ENCODE measurements at regions of chr5 and their contacts with region 1.

Region 1: GRCh38 chr5:56814963-56815658 is at the start of gene MAP3K1:
- DNase-seq: peak; percentile 86
- ATAC-seq: peak; percentile 63
- H3K4me3 Mint-ChIP-seq: peak within 1 kb of the TSS; percentile 93
- H3K27ac Mint-ChIP-seq: peak within 1 kb of the TSS; percentile 93
- H3K4me1 Mint-ChIP-seq: peaks cover 50% of the 10 kb centered on the region
- H3K27me3 Mint-ChIP-seq: no peaks in the 10 kb centered on the region
- CTCF ChIP-seq: no peak
- total RNA-seq, gene MAP3K1: 92.8 and 102 TPM in 2 replicates

Region 2: GRCh38 chr5:55994574-55995333 is 820.4 kb before region 1 on chr5 and contains the start of gene IL6ST:
- CTCF ChIA-PET with region 1: no interaction called
- POLR2A ChIA-PET with region 1: no interaction called
- intact Hi-C with region 1: loop called (anchors 1 kb)
- DNase-seq: peak; percentile 95
- ATAC-seq: peak; percentile 92
- H3K4me3 Mint-ChIP-seq: peak within 1 kb of the TSS; percentile 96
- H3K27ac Mint-ChIP-seq: peak within 1 kb of the TSS; percentile 95
- H3K4me1 Mint-ChIP-seq: peaks cover 38% of the 10 kb centered on the region
- H3K27me3 Mint-ChIP-seq: peaks cover 5% of the 10 kb centered on the region
- CTCF ChIP-seq: no peak
- total RNA-seq, gene IL6ST: 39.8 and 48.3 TPM in 2 replicates

Region 3: GRCh38 chr5:56415356-56415765 is 399.8 kb before region 1 on chr5:
- CTCF ChIA-PET with region 1: interaction called, 4 read pairs
- POLR2A ChIA-PET with region 1: interaction called, 7 read pairs
- intact Hi-C with region 1: loop called (anchors 1 kb)
- DNase-seq: peak; percentile 48
- ATAC-seq: peak; percentile 71
- H3K4me3 Mint-ChIP-seq: peak overlapping the region; percentile 78
- H3K27ac Mint-ChIP-seq: peak overlapping the region; percentile 99
- H3K4me1 Mint-ChIP-seq: peaks cover 82% of the 10 kb centered on the region
- H3K27me3 Mint-ChIP-seq: no peaks in the 10 kb centered on the region
- CTCF ChIP-seq: no peak

Region 4: DNA sequence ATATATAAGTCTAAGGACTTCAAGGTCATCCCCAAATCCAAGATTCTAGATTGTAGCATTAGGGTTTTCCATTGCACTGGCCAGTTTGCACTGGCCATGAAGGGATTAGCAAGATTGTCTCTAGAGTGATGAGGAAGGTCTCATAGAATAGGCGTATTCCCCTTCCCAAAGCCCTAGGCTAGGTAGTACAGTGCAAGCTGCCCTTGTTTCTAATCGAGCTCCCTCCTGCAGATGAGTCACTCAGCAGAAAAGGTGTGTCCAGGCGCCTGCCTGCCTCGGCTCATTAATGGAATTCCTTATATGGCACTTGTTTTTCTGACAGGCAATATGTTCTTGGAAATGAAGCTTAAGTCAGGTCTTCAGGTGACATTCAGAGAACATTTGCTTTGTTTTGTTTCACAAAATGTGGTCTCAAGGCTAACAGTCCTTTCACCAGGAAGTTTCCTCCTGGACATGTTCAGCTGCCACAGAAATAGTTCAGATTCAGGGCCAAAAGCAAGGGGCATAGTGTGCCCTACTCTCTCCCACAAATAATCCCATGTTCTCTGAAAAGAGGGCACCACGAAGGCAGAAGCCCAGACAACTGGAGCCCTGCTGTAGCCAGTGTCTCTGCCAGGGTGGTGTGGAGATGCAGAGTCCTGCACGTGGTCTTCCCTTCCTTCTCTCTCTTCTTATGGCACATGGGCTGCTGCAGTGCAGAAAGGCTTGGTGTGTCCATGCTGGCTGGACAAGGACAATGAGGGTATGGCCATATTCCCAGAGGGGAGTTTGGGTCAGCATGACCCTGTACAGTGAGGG is 280.9 kb before region 1 on chr5:
- CTCF ChIA-PET with region 1: no interaction called
- POLR2A ChIA-PET with region 1: no interaction called
- intact Hi-C with region 1: no loop called
- DNase-seq: no peak
- ATAC-seq: no peak
- H3K4me3 Mint-ChIP-seq: no peak overlapping the region
- H3K27ac Mint-ChIP-seq: no peak overlapping the region
- H3K4me1 Mint-ChIP-seq: no peaks in the 10 kb centered on the region
- H3K27me3 Mint-ChIP-seq: no peaks in the 10 kb centered on the region
- CTCF ChIP-seq: no peak

Region 5: GRCh38 chr5:56588636-56589480 is 226.3 kb before region 1 on chr5:
- CTCF ChIA-PET with region 1: no interaction called
- POLR2A ChIA-PET with region 1: interaction called, 9 read pairs
- intact Hi-C with region 1: loop called (anchors 1 kb)
- DNase-seq: peak; percentile 69
- ATAC-seq: peak; percentile 86
- H3K4me3 Mint-ChIP-seq: peak overlapping the region; percentile 64
- H3K27ac Mint-ChIP-seq: peak overlapping the region; percentile 97
- H3K4me1 Mint-ChIP-seq: peaks cover 69% of the 10 kb centered on the region
- H3K27me3 Mint-ChIP-seq: no peaks in the 10 kb centered on the region
- CTCF ChIP-seq: no peak

Region 6: GRCh38 chr5:56749842-56750241 is 65.3 kb before region 1 on chr5:
- CTCF ChIA-PET with region 1: no interaction called
- POLR2A ChIA-PET with region 1: no interaction called
- intact Hi-C with region 1: no loop called
- DNase-seq: no peak
- ATAC-seq: peak; percentile 40
- H3K4me3 Mint-ChIP-seq: no peak overlapping the region
- H3K27ac Mint-ChIP-seq: no peak overlapping the region
- H3K4me1 Mint-ChIP-seq: peaks cover 33% of the 10 kb centered on the region
- H3K27me3 Mint-ChIP-seq: no peaks in the 10 kb centered on the region
- CTCF ChIP-seq: no peak

Region 7: DNA sequence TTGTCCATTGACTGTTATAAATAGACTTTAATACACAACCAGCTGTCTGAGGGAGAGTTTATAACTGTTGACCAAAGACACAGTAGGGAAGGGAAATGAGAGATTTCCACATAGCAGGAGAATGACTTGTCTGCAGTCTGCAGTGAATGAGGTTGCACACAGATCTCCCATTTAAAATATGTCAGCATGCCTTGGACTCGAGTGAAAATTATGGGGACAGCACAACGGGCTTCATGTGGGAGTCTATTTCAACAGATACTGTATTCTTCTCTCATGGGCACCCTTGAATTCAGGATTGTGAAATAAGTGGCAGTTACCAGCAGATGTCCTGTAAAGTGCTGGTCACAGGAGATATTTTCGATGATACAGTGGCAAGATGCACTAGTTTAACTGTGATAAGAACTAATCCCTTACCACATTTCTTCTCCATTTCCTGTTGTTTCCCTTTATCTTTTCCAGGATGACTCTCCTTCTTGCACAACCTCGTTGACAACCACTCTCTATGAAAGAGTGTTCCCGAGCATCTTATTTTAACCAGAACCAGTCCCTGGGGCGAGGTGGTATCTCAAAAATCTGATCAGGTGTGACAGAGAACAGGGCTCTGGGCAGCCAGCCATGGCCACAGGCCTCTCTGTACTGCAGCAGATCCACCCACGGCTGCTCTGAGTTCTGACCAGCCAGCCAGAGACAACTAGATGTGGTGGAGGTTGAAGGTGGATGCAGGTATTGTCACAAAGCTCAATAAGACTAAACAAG is 51.2 kb before region 1 on chr5:
- CTCF ChIA-PET with region 1: no interaction called
- POLR2A ChIA-PET with region 1: interaction called, 4 read pairs
- intact Hi-C with region 1: loop called (anchors 5 kb)
- DNase-seq: peak; percentile 35
- ATAC-seq: peak; percentile 91
- H3K4me3 Mint-ChIP-seq: peak overlapping the region; percentile 38
- H3K27ac Mint-ChIP-seq: peak overlapping the region; percentile 78
- H3K4me1 Mint-ChIP-seq: peaks cover 78% of the 10 kb centered on the region
- H3K27me3 Mint-ChIP-seq: no peaks in the 10 kb centered on the region
- CTCF ChIP-seq: no peak

Region 8: DNA sequence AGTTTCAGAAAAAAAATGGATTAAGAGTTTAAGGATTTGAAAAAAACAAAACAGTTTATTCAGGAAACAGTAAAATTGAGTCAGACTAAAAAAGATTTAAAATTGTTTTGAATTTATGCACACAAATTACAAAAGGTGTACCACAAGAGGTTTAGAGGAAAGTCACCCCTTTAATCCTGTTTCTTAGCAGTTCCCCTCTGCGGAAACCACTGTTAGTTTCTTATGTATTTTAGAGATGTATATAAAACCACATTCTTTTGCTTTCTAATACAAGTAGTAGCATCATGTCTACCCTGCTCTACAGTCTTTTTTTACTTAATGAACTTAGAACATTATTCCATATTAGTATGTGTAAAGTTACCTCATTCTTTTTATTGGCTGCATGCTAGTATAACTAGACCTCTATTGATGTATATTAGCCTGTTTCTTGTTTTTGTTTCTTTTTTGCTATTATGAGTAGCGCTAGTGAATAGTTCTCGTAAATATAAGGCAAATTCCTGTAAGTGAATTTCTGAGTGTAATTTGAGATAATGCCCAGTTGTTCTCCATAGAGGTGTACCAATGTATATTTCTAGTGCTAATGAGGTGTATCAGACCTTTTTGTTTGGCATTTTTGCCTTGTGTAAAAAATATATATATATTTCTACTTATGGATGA is 378.8 kb after region 1 on chr5:
- CTCF ChIA-PET with region 1: no interaction called
- POLR2A ChIA-PET with region 1: no interaction called
- intact Hi-C with region 1: no loop called
- DNase-seq: no peak
- ATAC-seq: no peak
- H3K4me3 Mint-ChIP-seq: no peak overlapping the region
- H3K27ac Mint-ChIP-seq: no peak overlapping the region
- H3K4me1 Mint-ChIP-seq: peaks cover 68% of the 10 kb centered on the region
- H3K27me3 Mint-ChIP-seq: no peaks in the 10 kb centered on the region
- CTCF ChIP-seq: no peak